ENCODE measurements at regions of chr14 and their contacts with region 1.

Region 1: GRCh38 chr14:23057757-23058653 is 685 bp upstream of the CDH24 start:
- DNase-seq: no peak
- H3K4me3 ChIP-seq: peak overlapping the region; percentile 52
- H3K27me3 ChIP-seq: no peaks in the 10 kb centered on the region
- CTCF ChIP-seq: peak; percentile 92

Region 2: GRCh38 chr14:22973217-22974032 is 84.6 kb before region 1 on chr14:
- CTCF ChIA-PET with region 1: interaction called, 19 read pairs
- POLR2A ChIA-PET with region 1: interaction called, 9 read pairs
- DNase-seq: no peak
- H3K4me3 ChIP-seq: no peak overlapping the region
- H3K27me3 ChIP-seq: no peaks in the 10 kb centered on the region
- CTCF ChIP-seq: peak; percentile 65

Region 3: GRCh38 chr14:23033801-23034482 is 24.1 kb before region 1 on chr14:
- CTCF ChIA-PET with region 1: interaction called, 12 read pairs
- POLR2A ChIA-PET with region 1: no interaction called
- DNase-seq: no peak
- H3K4me3 ChIP-seq: peak overlapping the region; percentile 65
- H3K27me3 ChIP-seq: no peaks in the 10 kb centered on the region
- CTCF ChIP-seq: no peak

Region 4: GRCh38 chr14:23068476-23069412 is 10.7 kb after region 1 on chr14:
- CTCF ChIA-PET with region 1: interaction called, 57 read pairs
- POLR2A ChIA-PET with region 1: no interaction called
- DNase-seq: peak; percentile 70
- H3K4me3 ChIP-seq: no peak overlapping the region
- H3K27me3 ChIP-seq: no peaks in the 10 kb centered on the region
- CTCF ChIP-seq: peak; percentile 99

Region 5: GRCh38 chr14:23101213-23101970 is 43.4 kb after region 1 on chr14:
- CTCF ChIA-PET with region 1: interaction called, 10 read pairs
- POLR2A ChIA-PET with region 1: no interaction called
- DNase-seq: no peak
- H3K4me3 ChIP-seq: no peak overlapping the region
- H3K27me3 ChIP-seq: no peaks in the 10 kb centered on the region
- CTCF ChIP-seq: no peak

Region 6: GRCh38 chr14:23228812-23229211 is 170.8 kb after region 1 on chr14:
- CTCF ChIA-PET with region 1: no interaction called
- POLR2A ChIA-PET with region 1: no interaction called
- DNase-seq: no peak
- H3K4me3 ChIP-seq: no peak overlapping the region
- H3K27me3 ChIP-seq: no peaks in the 10 kb centered on the region
- CTCF ChIP-seq: no peak

Measured in BJ (cell line).